ENCODE measurements at regions of chr16 and their contacts with region 1.

Region 1: GRCh38 chr16:70653809-70654771 is 7.7 kb downstream of the IL34 start:
- DNase-seq: peak; percentile 95
- H3K4me3 ChIP-seq: peak overlapping the region in 2 of 3 experiments; percentile 8 to 29
- H3K27ac ChIP-seq: no peak overlapping the region
- H3K4me1 ChIP-seq: no peaks in the 10 kb centered on the region
- H3K27me3 ChIP-seq: no peaks in the 10 kb centered on the region
- CTCF ChIP-seq: peak; percentile 67 to 78
- POLR2A ChIP-seq: no peak

Region 2: DNA sequence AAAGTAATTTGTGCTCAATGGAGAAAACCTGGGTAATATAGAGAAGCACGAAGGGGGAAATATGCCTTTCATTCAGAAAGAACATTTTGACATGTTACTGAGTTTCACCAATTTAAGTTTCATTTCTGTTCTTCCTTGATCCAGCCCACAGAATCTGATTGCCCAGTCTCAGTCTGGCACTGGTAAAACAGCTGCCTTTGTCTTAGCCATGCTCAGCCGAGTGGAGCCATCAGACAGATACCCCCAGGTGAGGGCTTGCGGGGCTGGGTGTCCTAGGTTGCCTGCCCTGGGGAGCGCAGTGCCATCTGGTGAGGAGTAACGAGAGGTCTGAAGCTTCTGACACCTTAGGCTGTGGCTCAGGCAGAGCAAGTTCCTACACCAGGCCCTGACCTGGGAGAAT is 289.7 kb before region 1 on chr16:
- CTCF ChIA-PET with region 1: interaction called, 29 read pairs
- POLR2A ChIA-PET with region 1: no interaction called
- dilution Hi-C with region 1: no loop called
- intact Hi-C with region 1: no loop called
- DNase-seq: no peak
- H3K4me3 ChIP-seq: no peak overlapping the region
- H3K27ac ChIP-seq: no peak overlapping the region
- H3K4me1 ChIP-seq: no peaks in the 10 kb centered on the region
- H3K27me3 ChIP-seq: no peaks in the 10 kb centered on the region
- CTCF ChIP-seq: no peak
- POLR2A ChIP-seq: no peak

Region 3: DNA sequence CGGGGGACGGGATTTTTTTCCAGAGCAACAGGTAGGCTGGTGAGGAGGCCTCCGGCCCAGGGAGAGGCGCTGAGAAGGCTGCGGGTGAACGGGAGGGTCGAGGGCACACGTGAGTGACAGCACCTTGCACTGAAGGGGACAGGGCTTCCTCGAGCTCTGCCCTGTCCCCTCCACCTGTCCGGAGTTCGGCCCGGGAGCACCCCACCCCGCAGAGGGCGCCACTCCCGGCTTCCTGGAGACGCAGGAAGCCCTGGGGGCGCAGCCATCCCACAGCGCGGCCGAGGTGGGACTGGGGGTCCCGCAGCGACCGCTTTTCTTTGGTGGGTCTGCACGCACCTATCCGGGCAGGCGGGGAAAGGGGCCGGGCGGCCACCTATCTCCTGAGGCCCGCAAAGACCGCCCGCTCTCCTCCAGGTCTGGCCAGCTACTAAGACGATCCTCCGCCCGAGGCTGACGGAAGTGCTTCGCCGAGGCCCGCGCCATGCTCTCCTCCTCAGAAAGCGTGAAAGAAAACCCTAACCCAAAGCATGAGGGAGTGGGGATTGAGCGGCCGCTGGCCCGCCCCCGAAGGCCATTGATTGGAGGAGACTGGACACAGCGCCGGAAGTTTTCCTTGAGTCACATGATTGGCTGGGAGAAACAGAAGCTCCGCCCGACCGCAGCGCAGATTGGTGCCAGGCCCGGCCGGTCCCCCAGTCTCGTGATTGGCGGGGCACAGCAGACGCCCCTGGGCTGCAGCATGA is 273.1 kb before region 1 on chr16:
- CTCF ChIA-PET with region 1: no interaction called
- POLR2A ChIA-PET with region 1: interaction called, 4 read pairs
- dilution Hi-C with region 1: no loop called
- intact Hi-C with region 1: loop called (anchors 1 kb)
- DNase-seq: peak; percentile 98
- H3K4me3 ChIP-seq: peak overlapping the region; percentile 51 to 59 (median 54)
- H3K27ac ChIP-seq: no peak overlapping the region
- H3K4me1 ChIP-seq: peaks cover 6% of the 10 kb centered on the region
- H3K27me3 ChIP-seq: no peaks in the 10 kb centered on the region
- CTCF ChIP-seq: peak; percentile 6 to 9
- POLR2A ChIP-seq: peak; percentile 94

Region 4: GRCh38 chr16:70523076-70523742 is 130.9 kb before region 1 on chr16 and contains the start of gene COG4:
- CTCF ChIA-PET with region 1: interaction called, 28 read pairs
- POLR2A ChIA-PET with region 1: no interaction called
- dilution Hi-C with region 1: loop called (anchors 25 kb)
- intact Hi-C with region 1: no loop called
- DNase-seq: peak; percentile 84
- H3K4me3 ChIP-seq: peak within 1 kb of the TSS; percentile 54 to 94 (median 85)
- H3K27ac ChIP-seq: peak within 1 kb of the TSS; percentile 82
- H3K4me1 ChIP-seq: peaks cover 40% of the 10 kb centered on the region
- H3K27me3 ChIP-seq: no peaks in the 10 kb centered on the region
- CTCF ChIP-seq: no peak
- POLR2A ChIP-seq: peak; percentile 83
- total RNA-seq, gene COG4: 46.5 and 61.2 TPM in 2 replicates

Region 5: GRCh38 chr16:70553645-70554044 is 100.4 kb before region 1 on chr16:
- CTCF ChIA-PET with region 1: interaction called, 25 read pairs
- POLR2A ChIA-PET with region 1: no interaction called
- dilution Hi-C with region 1: loop called (anchors 25 kb)
- intact Hi-C with region 1: no loop called
- DNase-seq: no peak
- H3K4me3 ChIP-seq: no peak overlapping the region
- H3K27ac ChIP-seq: peak overlapping the region; percentile 41
- H3K4me1 ChIP-seq: peaks cover 18% of the 10 kb centered on the region
- H3K27me3 ChIP-seq: no peaks in the 10 kb centered on the region
- CTCF ChIP-seq: no peak
- POLR2A ChIP-seq: no peak

Region 6: GRCh38 chr16:70627696-70628095 is 26.4 kb before region 1 on chr16:
- CTCF ChIA-PET with region 1: interaction called, 3 read pairs
- POLR2A ChIA-PET with region 1: no interaction called
- dilution Hi-C with region 1: no loop called
- intact Hi-C with region 1: loop called (anchors 2 kb)
- DNase-seq: no peak
- H3K4me3 ChIP-seq: no peak overlapping the region
- H3K27ac ChIP-seq: no peak overlapping the region
- H3K4me1 ChIP-seq: no peaks in the 10 kb centered on the region
- H3K27me3 ChIP-seq: no peaks in the 10 kb centered on the region
- CTCF ChIP-seq: no peak
- POLR2A ChIP-seq: no peak

Region 7: GRCh38 chr16:70730031-70730430 is 75.9 kb after region 1 on chr16:
- CTCF ChIA-PET with region 1: no interaction called
- POLR2A ChIA-PET with region 1: no interaction called
- dilution Hi-C with region 1: no loop called
- intact Hi-C with region 1: no loop called
- DNase-seq: no peak
- H3K4me3 ChIP-seq: no peak overlapping the region
- H3K27ac ChIP-seq: no peak overlapping the region
- H3K4me1 ChIP-seq: no peaks in the 10 kb centered on the region
- H3K27me3 ChIP-seq: no peaks in the 10 kb centered on the region
- CTCF ChIP-seq: no peak
- POLR2A ChIP-seq: no peak